Activated B cell treated with CpG ODN at 0.5 μM for 24 hours (primary cell): ENCODE measurements at regions of chr2 and their contacts with region 1.

Region 1: DNA sequence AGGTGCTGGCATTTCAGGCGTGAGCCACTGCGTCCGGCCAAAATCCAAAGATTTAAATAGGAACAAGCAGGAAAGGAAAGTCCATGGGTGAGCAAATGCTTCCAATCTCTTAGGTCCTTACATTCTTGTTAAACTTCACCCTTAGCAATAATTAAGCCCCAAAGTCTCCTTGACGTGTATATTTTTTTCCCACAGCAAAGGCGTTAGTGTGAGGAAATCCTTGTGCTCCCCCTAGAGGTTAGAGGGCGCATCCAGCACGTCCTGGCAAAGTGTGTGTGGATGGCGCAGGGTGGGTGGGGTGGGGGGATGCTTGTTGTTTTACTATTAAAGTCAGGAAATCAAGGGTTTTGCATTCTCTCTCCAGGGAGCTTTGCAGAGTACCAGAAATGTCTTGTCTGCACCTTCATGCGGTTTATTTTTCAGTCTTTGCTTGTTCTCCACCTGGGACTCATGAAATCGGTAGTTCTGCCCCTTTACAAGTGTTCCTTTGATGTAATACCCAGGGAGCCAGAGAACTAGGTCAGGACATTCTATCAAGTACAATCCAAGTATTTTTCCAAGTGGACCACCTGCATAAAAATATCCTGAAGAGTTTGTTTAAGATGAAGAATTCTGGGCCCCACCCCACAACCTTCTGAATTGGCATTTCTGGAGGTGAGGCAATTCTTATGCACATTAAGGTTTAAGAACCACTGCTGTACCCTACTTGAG is 22.2 kb upstream of the ITSN2 start:
- DNase-seq: peak; percentile 35
- ATAC-seq: peak; percentile 97
- H3K4me3 Mint-ChIP-seq: no peak overlapping the region
- H3K27ac Mint-ChIP-seq: no peak overlapping the region
- H3K4me1 Mint-ChIP-seq: peaks cover 2% of the 10 kb centered on the region
- H3K27me3 Mint-ChIP-seq: no peaks in the 10 kb centered on the region
- CTCF ChIP-seq: no peak

Region 2: GRCh38 chr2:23554054-23554697 is 828.3 kb before region 1 on chr2:
- CTCF ChIA-PET with region 1: no interaction called
- POLR2A ChIA-PET with region 1: no interaction called
- intact Hi-C with region 1: no loop called
- DNase-seq: no peak
- ATAC-seq: no peak
- H3K4me3 Mint-ChIP-seq: no peak overlapping the region
- H3K27ac Mint-ChIP-seq: no peak overlapping the region
- H3K4me1 Mint-ChIP-seq: no peaks in the 10 kb centered on the region
- H3K27me3 Mint-ChIP-seq: no peaks in the 10 kb centered on the region
- CTCF ChIP-seq: no peak

Region 3: DNA sequence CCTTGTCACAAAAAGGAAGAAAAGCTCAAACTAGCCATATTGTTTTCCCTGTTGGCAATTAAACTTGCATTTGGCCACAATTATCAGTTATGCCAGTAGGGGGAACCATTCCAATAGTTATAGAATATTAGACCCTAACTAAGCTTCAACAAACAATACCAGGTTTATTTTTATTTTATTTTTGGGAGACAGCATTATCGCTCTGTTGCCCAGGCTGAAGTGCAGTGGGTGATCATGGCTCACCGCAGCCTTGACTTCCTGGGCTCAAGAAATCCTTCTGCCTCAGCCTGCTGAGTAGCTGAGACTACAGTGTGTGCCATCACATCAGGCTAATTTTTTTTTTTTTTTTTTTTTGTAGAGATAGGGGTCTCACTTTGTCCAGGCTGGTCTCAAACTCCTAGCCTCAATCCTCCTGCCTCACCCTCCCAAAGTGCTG is 557.7 kb before region 1 on chr2:
- CTCF ChIA-PET with region 1: no interaction called
- POLR2A ChIA-PET with region 1: no interaction called
- intact Hi-C with region 1: loop called (anchors 10 kb)
- DNase-seq: no peak
- ATAC-seq: peak; percentile 65
- H3K4me3 Mint-ChIP-seq: no peak overlapping the region
- H3K27ac Mint-ChIP-seq: no peak overlapping the region
- H3K4me1 Mint-ChIP-seq: peaks cover 2% of the 10 kb centered on the region
- H3K27me3 Mint-ChIP-seq: no peaks in the 10 kb centered on the region
- CTCF ChIP-seq: peak; percentile 18

Region 4: DNA sequence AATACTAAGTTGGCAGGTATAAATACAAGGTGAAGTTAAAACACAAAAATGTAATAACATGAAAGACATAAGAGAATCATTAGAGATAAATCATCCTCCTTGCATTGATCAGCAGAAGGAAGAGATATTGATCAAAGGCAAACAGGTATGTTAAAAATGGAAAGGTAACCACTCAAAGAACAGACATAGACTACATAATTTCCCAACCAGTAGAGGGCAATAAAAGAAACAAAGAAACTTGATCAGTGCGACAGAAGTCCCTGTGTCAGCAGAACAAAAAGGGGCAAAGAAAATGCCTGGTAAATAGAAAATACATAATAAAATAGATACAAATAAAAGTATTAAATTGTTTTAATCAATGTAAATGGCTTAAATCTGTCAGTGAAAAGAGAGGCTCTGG is 154.0 kb before region 1 on chr2:
- CTCF ChIA-PET with region 1: no interaction called
- POLR2A ChIA-PET with region 1: no interaction called
- intact Hi-C with region 1: loop called (anchors 1 kb)
- DNase-seq: no peak
- ATAC-seq: no peak
- H3K4me3 Mint-ChIP-seq: no peak overlapping the region
- H3K27ac Mint-ChIP-seq: no peak overlapping the region
- H3K4me1 Mint-ChIP-seq: no peaks in the 10 kb centered on the region
- H3K27me3 Mint-ChIP-seq: no peaks in the 10 kb centered on the region
- CTCF ChIP-seq: no peak

Region 5: GRCh38 chr2:24297663-24298062 is 84.9 kb before region 1 on chr2:
- CTCF ChIA-PET with region 1: no interaction called
- POLR2A ChIA-PET with region 1: interaction called, 6 read pairs
- intact Hi-C with region 1: loop called (anchors 2 kb)
- DNase-seq: no peak
- ATAC-seq: no peak
- H3K4me3 Mint-ChIP-seq: no peak overlapping the region
- H3K27ac Mint-ChIP-seq: no peak overlapping the region
- H3K4me1 Mint-ChIP-seq: no peaks in the 10 kb centered on the region
- H3K27me3 Mint-ChIP-seq: no peaks in the 10 kb centered on the region
- CTCF ChIP-seq: no peak

Region 6: DNA sequence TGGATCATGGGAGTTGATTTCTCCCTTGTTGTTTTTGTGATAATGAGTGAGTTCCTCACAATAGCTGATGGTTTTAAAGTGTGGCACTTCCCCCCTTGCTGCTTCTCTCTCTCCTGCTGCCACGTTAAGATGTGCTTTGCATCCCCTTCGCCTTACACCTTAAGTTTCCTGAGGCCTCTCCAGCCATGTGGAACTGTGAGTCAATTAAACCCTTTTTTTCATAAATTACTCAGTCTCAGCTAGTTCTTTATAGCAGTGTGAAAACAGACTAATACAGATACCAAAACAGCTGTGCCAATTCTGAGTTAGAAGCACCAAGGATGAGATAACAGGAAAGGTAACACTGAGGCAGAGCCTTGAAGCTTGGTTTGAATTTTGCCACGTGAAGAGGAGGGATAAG is 66.8 kb before region 1 on chr2:
- CTCF ChIA-PET with region 1: no interaction called
- POLR2A ChIA-PET with region 1: no interaction called
- intact Hi-C with region 1: loop called (anchors 1 kb)
- DNase-seq: no peak
- ATAC-seq: peak; percentile 87
- H3K4me3 Mint-ChIP-seq: peak overlapping the region; percentile 50
- H3K27ac Mint-ChIP-seq: peak overlapping the region; percentile 80
- H3K4me1 Mint-ChIP-seq: peaks cover 51% of the 10 kb centered on the region
- H3K27me3 Mint-ChIP-seq: no peaks in the 10 kb centered on the region
- CTCF ChIP-seq: no peak

Region 7: DNA sequence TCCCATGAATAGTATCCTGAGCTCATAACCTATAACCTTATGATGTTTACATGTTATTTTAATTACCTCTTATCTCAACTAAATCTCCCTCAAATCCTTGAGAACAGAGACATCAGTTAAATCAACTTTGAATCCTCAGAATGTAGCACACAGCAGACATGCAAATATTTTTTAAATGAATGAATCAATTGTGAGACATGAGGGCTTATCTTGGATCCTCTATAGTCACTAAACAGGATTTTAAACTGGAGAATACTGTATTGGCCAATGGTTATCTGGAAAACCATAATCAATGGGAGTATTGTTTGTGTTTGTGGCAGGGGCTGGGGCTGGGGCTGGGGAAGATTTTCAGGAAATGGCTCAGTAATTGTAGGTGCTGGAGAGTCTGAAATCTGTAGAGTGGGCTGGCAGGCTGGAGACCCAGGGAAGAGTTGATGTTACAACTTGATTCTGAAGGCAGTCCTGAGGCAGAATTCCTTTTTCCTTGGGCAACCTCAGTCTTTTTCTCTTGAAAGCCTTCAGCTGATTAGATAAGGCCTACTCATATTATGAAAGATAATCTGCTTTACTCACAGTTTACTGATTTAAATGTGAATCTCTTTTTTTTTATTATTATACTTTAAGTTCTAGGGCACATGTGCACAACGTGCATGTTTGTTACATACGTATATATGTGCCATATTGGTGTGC is 214.8 kb after region 1 on chr2:
- CTCF ChIA-PET with region 1: no interaction called
- POLR2A ChIA-PET with region 1: no interaction called
- intact Hi-C with region 1: no loop called
- DNase-seq: no peak
- ATAC-seq: no peak
- H3K4me3 Mint-ChIP-seq: no peak overlapping the region
- H3K27ac Mint-ChIP-seq: no peak overlapping the region
- H3K4me1 Mint-ChIP-seq: no peaks in the 10 kb centered on the region
- H3K27me3 Mint-ChIP-seq: no peaks in the 10 kb centered on the region
- CTCF ChIP-seq: no peak